ENCODE measurements at regions of chr3 and their contacts with region 1.

Region 1: DNA sequence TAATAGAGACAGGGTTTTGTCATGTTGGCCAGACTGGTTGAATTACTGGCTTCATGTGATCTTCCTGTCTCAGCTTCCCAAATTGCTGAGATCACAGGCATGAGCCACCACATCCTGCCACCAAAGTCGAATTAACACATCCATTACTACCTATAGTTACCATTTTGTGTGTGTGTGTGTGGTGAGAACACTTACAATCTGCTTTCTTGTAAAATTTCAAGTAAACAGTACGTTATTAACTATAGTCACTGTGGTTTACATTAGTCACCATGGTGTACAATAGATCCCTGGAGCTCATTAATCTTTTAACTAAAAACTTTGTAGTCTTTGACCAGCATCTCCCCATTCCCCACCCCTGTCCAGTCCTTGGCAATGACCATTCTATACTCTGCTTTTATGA is 270.0 kb downstream of the NAALADL2 start:
- DNase-seq: peak; percentile 84
- ATAC-seq: peak; percentile 94
- H3K4me3 ChIP-seq: no peak overlapping the region
- H3K27ac ChIP-seq: peak overlapping the region; percentile 82
- H3K4me1 ChIP-seq: peaks cover 16% of the 10 kb centered on the region
- H3K27me3 ChIP-seq: no peaks in the 10 kb centered on the region
- CTCF ChIP-seq: no peak

Region 2: DNA sequence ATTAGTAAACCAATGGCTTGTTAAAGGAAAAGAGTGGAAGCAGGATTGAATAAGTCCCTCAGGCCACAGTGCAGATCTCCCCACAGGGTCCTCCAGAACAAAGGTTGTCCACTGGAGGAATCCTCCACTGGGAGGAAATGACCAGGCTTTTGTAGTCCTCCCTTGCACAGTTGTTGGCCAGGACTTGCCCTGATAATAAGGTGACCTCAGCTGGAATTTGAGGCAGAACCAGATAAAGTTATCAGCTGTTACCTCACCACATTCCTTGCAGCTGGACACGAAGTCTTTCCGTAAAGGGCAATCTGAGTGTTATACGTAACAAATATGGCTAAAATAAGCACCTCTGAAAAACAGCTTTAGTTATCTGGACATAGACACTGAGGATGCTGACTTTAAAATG is 353.5 kb before region 1 on chr3:
- CTCF ChIA-PET with region 1: no interaction called
- POLR2A ChIA-PET with region 1: no interaction called
- intact Hi-C with region 1: loop called (anchors 5 kb)
- DNase-seq: no peak
- ATAC-seq: peak; percentile 6
- H3K4me3 ChIP-seq: no peak overlapping the region; the same call in 1 of the 2 replicates
- H3K27ac ChIP-seq: peak overlapping the region; percentile 71
- H3K4me1 ChIP-seq: peaks cover 23% of the 10 kb centered on the region
- H3K27me3 ChIP-seq: no peaks in the 10 kb centered on the region
- CTCF ChIP-seq: no peak

Measured in PC-3 (cell line).